HepG2 (cell line): ENCODE measurements at regions of chr9 and their contacts with region 1.

Region 1: DNA sequence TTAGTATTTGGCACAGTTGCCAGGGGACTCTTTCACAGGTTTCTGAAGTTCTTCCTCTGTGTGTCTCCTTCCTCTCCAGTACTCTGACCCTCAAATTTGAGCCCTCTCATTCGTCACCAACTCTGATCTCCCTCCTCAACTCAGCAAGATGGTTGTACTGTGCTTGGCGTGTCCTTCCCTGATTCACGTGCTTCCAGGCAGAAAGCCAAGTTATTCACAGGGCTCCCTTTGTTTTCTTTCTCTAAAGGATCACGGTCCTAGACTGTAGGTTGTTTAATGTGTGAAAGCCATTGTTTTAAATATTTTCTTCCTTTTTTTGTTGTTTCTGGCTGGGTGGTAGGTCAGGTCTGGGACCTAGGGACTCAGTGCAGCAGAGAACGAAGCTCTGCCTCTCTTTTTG is 142.9 kb downstream of the DMAC1 start:
- DNase-seq: peak; percentile 8
- ATAC-seq: no peak
- H3K4me3 ChIP-seq: no peak overlapping the region
- H3K27ac ChIP-seq: no peak overlapping the region
- H3K4me1 ChIP-seq: no peaks in the 10 kb centered on the region
- H3K27me3 ChIP-seq: no peaks in the 10 kb centered on the region
- CTCF ChIP-seq: no peak
- EP300 ChIP-seq: no peak
- POLR2A ChIP-seq: no peak
- RAD21 ChIP-seq: no peak

Region 2: DNA sequence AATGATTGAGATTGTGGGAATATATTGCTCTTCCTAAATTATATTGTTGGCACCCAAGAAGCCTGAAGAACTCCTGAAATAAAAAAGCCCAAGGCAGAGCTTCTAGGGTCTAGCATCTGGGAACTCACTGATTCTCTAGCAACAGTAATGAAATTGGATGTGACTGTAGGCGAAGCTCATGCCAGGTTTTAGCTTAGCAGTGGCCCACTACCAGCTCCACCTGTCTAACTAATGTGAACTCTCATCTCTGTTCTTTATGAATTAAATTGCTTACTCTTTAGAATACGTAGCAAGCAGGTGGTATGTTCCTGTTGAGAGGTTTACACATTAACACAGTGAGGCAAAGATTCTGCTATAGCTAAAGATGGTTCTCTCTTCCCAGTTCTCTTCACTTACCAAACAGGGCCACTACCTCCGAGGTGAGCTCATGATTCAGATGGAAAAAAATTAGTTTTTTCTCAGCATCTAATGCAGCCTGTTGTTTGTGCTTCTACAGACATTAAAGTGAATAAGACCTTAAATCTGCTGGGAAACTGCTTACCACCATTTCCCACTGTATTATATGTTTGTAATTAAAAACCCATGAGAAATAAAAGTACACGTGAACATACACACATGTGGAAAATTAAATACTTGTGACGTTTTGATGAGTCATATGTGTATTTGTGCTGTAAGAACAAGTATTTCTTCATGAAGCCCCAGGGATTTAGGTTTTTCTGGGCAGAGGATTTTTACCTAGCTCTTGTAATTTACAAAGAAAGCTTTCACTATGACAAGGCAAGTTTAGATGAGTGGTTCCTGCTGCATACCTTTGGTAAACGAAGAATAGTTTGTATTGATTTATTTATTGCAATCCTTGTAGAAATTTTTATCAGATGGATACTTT is 538.7 kb before region 1 on chr9:
- CTCF ChIA-PET with region 1: no interaction called
- POLR2A ChIA-PET with region 1: no interaction called
- in situ Hi-C with region 1: no loop called
- intact Hi-C with region 1: no loop called
- DNase-seq: no peak
- ATAC-seq: no peak
- H3K4me3 ChIP-seq: no peak overlapping the region
- H3K27ac ChIP-seq: no peak overlapping the region
- H3K4me1 ChIP-seq: no peaks in the 10 kb centered on the region
- H3K27me3 ChIP-seq: no peaks in the 10 kb centered on the region
- CTCF ChIP-seq: no peak
- EP300 ChIP-seq: no peak
- POLR2A ChIP-seq: no peak
- RAD21 ChIP-seq: no peak

Region 3: DNA sequence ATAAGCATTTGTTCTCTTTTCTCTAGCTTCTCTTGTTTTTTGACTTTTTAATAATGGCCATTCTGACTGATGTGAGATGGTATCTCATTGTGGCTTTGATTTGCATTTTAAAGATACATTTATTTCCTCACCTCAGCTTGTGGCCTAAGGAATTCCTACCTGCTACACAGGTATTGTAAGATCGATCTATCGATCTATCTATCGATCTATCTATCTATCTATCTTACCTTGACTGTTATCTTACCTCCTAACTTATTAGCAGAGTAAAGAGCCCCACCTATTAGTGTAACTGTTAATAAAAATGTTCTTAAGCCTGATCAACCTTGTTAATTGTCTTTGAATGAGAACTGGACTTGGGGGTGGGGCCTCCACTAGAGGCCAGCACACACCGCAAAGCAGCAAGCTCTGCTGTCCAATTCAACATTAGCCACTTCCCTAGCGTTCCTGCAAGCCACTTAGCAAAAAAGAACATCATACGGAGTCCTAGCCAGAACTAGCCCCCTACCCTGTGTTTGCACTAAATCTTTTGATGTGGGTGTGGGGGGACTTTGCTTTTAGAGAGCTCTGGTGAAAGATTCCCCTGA is 383.2 kb before region 1 on chr9:
- CTCF ChIA-PET with region 1: no interaction called
- POLR2A ChIA-PET with region 1: no interaction called
- in situ Hi-C with region 1: no loop called
- intact Hi-C with region 1: loop called (anchors 5 kb)
- DNase-seq: no peak
- ATAC-seq: peak; percentile 73
- H3K4me3 ChIP-seq: no peak overlapping the region
- H3K27ac ChIP-seq: no peak overlapping the region
- H3K4me1 ChIP-seq: no peaks in the 10 kb centered on the region
- H3K27me3 ChIP-seq: peaks cover 0 to 6% of the 10 kb centered on the region in 2 experiments; a peak in 2 of 5 replicates
- CTCF ChIP-seq: peak; percentile 51
- EP300 ChIP-seq: no peak
- POLR2A ChIP-seq: no peak
- RAD21 ChIP-seq: no peak

Region 4: GRCh38 chr9:7405924-7406604 is 250.6 kb before region 1 on chr9:
- CTCF ChIA-PET with region 1: no interaction called
- POLR2A ChIA-PET with region 1: no interaction called
- in situ Hi-C with region 1: no loop called
- intact Hi-C with region 1: loop called (anchors 5 kb)
- DNase-seq: no peak
- ATAC-seq: no peak
- H3K4me3 ChIP-seq: no peak overlapping the region
- H3K27ac ChIP-seq: no peak overlapping the region
- H3K4me1 ChIP-seq: no peaks in the 10 kb centered on the region
- H3K27me3 ChIP-seq: no peaks in the 10 kb centered on the region
- CTCF ChIP-seq: no peak
- EP300 ChIP-seq: no peak
- POLR2A ChIP-seq: no peak
- RAD21 ChIP-seq: no peak

Region 5: GRCh38 chr9:7570107-7570720 is 86.4 kb before region 1 on chr9:
- CTCF ChIA-PET with region 1: no interaction called
- POLR2A ChIA-PET with region 1: no interaction called
- in situ Hi-C with region 1: no loop called
- intact Hi-C with region 1: loop called (anchors 1 kb)
- DNase-seq: peak; percentile 58
- ATAC-seq: peak; percentile 81
- H3K4me3 ChIP-seq: no peak overlapping the region
- H3K27ac ChIP-seq: no peak overlapping the region
- H3K4me1 ChIP-seq: no peaks in the 10 kb centered on the region
- H3K27me3 ChIP-seq: no peaks in the 10 kb centered on the region
- CTCF ChIP-seq: peak; percentile 84
- EP300 ChIP-seq: no peak
- POLR2A ChIP-seq: no peak
- RAD21 ChIP-seq: no peak

Region 6: DNA sequence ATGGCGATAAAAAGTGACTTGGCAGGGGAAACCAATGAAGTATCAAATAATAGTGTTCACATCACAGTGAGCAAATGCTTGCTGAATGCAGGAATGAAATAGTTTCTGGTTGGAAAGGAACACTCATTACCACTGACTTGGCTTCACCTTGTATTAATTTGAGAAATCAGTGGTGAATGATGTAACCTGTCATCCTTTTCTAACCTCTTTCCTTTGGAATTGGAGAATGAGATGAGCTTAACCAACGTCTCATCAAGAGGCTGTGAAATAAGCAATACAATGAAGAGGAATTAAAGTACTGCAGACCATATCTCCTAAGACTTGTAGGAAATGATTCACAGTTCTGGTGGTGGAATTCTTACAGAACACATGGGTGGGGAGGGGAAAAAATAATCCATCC is 49.2 kb before region 1 on chr9:
- CTCF ChIA-PET with region 1: no interaction called
- POLR2A ChIA-PET with region 1: no interaction called
- in situ Hi-C with region 1: no loop called
- intact Hi-C with region 1: no loop called
- DNase-seq: no peak
- ATAC-seq: no peak
- H3K4me3 ChIP-seq: no peak overlapping the region
- H3K27ac ChIP-seq: no peak overlapping the region
- H3K4me1 ChIP-seq: no peaks in the 10 kb centered on the region
- H3K27me3 ChIP-seq: no peaks in the 10 kb centered on the region
- CTCF ChIP-seq: no peak
- EP300 ChIP-seq: no peak
- POLR2A ChIP-seq: no peak
- RAD21 ChIP-seq: no peak

Region 7: GRCh38 chr9:7739595-7739994 is 83.0 kb after region 1 on chr9:
- CTCF ChIA-PET with region 1: no interaction called
- POLR2A ChIA-PET with region 1: no interaction called
- in situ Hi-C with region 1: no loop called
- intact Hi-C with region 1: no loop called
- DNase-seq: no peak
- ATAC-seq: no peak
- H3K4me3 ChIP-seq: no peak overlapping the region
- H3K27ac ChIP-seq: no peak overlapping the region
- H3K4me1 ChIP-seq: no peaks in the 10 kb centered on the region
- H3K27me3 ChIP-seq: no peaks in the 10 kb centered on the region
- CTCF ChIP-seq: no peak
- EP300 ChIP-seq: no peak
- POLR2A ChIP-seq: no peak
- RAD21 ChIP-seq: no peak